Mammary epithelial cell (primary cell): ENCODE measurements at regions of chr6 and their contacts with region 1.

Region 1: DNA sequence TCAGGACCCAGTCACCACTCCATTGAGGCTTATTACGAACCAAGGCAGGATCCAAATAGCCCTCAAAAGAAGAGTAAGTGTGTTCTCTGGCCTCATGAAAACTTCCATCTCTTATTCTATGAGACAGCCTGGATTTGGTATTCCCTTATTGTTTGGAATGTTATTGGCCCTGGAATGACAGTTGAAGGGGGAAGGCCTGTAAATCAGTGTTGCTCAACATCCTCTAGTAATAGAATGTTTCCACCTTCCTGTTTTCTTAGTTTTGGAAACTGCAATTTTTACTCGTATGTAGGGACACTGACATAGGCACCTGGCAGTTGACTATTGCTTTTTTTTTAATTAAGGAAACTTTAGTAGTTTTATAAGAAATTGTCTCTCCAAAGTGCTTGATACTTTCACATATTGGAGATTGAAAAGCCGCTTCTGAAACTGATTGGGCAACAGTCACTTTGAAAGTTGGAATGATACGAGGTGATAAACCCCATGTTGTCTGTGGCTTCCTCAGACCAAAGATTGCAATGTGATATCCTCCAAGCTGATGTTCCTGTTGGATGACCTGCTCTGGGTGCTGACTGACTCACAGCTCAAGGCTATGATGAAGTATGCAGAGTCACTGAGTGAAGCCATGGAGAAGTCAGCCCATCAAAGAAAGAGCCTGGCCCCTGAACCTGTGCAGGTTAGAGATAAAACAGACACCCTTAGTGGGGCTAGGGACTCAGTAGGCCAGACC is 43.1 kb downstream of the BLTP3A start:
- DNase-seq: peak; percentile 79
- H3K4me3 ChIP-seq: no peak overlapping the region
- H3K27ac ChIP-seq: no peak overlapping the region
- H3K4me1 ChIP-seq: peaks cover 11% of the 10 kb centered on the region
- H3K27me3 ChIP-seq: no peaks in the 10 kb centered on the region
- CTCF ChIP-seq: no peak

Region 2: GRCh38 chr6:34723203-34723602 is 111.8 kb before region 1 on chr6:
- CTCF ChIA-PET with region 1: no interaction called
- dilution Hi-C with region 1: no loop called
- in situ Hi-C with region 1: no loop called
- intact Hi-C with region 1: no loop called
- DNase-seq: no peak
- H3K4me3 ChIP-seq: no peak overlapping the region
- H3K27ac ChIP-seq: no peak overlapping the region
- H3K4me1 ChIP-seq: peaks cover 6% of the 10 kb centered on the region
- H3K27me3 ChIP-seq: no peaks in the 10 kb centered on the region
- CTCF ChIP-seq: no peak

Region 3: GRCh38 chr6:34791701-34792235 is 43.2 kb before region 1 on chr6 and contains the start of gene BLTP3A:
- CTCF ChIA-PET with region 1: no interaction called
- dilution Hi-C with region 1: no loop called
- in situ Hi-C with region 1: no loop called
- intact Hi-C with region 1: loop called (anchors 2 kb)
- DNase-seq: peak; percentile 50
- H3K4me3 ChIP-seq: peak within 1 kb of the TSS; percentile 57 to 86 (median 83)
- H3K27ac ChIP-seq: peak within 1 kb of the TSS; percentile 58
- H3K4me1 ChIP-seq: peaks cover 12% of the 10 kb centered on the region
- H3K27me3 ChIP-seq: no peaks in the 10 kb centered on the region
- CTCF ChIP-seq: no peak
- total RNA-seq, gene BLTP3A: 9.6 to 19.2 TPM

Region 4: GRCh38 chr6:35219683-35220326 is 384.9 kb after region 1 on chr6:
- CTCF ChIA-PET with region 1: no interaction called
- dilution Hi-C with region 1: loop called (anchors 5 kb)
- in situ Hi-C with region 1: no loop called
- intact Hi-C with region 1: no loop called
- DNase-seq: no peak
- H3K4me3 ChIP-seq: no peak overlapping the region
- H3K27ac ChIP-seq: no peak overlapping the region
- H3K4me1 ChIP-seq: no peaks in the 10 kb centered on the region
- H3K27me3 ChIP-seq: no peaks in the 10 kb centered on the region
- CTCF ChIP-seq: no peak